ENCODE measurements at regions of chr6 and their contacts with region 1.

Region 1: DNA sequence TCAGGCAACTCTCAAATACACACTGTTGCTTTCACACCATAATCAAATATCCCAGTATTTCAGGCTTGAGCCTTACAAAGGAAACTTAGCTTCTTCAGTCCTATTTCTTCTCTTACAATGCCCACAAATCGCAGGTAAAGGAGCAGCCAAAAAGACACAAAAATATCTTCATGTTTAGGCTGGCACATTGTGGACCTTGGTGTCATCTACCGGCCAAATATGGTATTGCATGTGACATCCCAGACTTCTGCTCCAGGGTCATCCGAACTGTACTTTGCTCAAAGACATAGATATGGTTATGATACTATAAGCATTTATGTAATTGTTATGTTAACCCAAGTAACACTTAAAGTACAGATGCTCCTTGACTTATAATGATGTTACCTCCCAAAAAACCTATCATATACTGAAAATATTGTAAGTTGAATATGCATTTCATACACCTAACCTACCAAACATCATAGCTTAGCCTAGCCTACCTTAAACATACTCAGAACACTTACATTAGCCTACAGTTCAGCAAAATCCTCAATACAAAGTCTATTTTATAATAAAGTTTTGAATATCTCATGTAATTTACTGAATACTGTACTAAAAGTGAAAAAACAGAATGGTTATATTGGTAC is 4.6 kb downstream of the OR2H2 start:
- DNase-seq: peak in 2 of 6 donors; percentile 14 to 64
- ATAC-seq: peak; percentile 61 to 94 (median 90)
- H3K4me3 ChIP-seq: no peak overlapping the region
- H3K27ac ChIP-seq: no peak overlapping the region
- H3K4me1 ChIP-seq: no peaks in the 10 kb centered on the region
- H3K27me3 ChIP-seq: peaks cover 0 to 7% (median 0%) of the 10 kb centered on the region in 4 donors
- CTCF ChIP-seq: peak; percentile 77 to 97 (median 96)

Region 2: GRCh38 chr6:29426655-29427054 is 162.9 kb before region 1 on chr6:
- intact Hi-C with region 1: loop called in 1 of 3 experiments (anchors 10 kb)
- DNase-seq: no peak
- ATAC-seq: no peak
- H3K4me3 ChIP-seq: no peak overlapping the region
- H3K27ac ChIP-seq: no peak overlapping the region
- H3K4me1 ChIP-seq: no peaks in the 10 kb centered on the region
- H3K27me3 ChIP-seq: no peaks in the 10 kb centered on the region
- CTCF ChIP-seq: no peak

Measured in pancreas (tissue), 10 donors.